AG04450 (cell line): ENCODE measurements at regions of chr12 and their contacts with region 1.

Region 1: GRCh38 chr12:123365025-123365917 is 624 bp upstream of the SBNO1 start:
- DNase-seq: peak; percentile 97
- H3K4me3 ChIP-seq: peak overlapping the region; percentile 74
- H3K27ac ChIP-seq: peak overlapping the region; percentile 98
- H3K27me3 ChIP-seq: no peaks in the 10 kb centered on the region
- CTCF ChIP-seq: peak; percentile 92

Region 2: DNA sequence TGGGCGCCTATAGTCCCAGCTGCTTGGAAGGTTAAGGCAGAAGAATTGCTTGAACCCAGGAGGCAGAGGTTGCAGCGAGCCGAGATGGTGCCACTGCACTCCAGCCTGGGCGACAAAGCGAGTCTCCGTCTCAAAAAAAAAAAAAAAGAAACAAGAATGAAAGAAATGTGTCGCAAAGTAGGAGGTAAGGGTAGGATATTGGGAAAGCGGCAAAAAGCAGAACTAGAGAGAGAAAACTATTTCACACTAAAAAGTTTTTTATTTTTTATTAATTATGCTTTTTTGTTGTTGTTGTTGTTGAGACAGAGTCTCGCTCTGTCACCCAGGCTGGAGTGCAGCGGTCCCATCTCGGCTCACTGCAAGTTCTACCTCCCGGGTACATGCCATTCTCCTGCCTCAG is 18.3 kb before region 1 on chr12:
- CTCF ChIA-PET with region 1: interaction called, 8 read pairs
- POLR2A ChIA-PET with region 1: interaction called, 10 read pairs
- DNase-seq: no peak
- H3K4me3 ChIP-seq: no peak overlapping the region
- H3K27ac ChIP-seq: no peak overlapping the region
- H3K27me3 ChIP-seq: no peaks in the 10 kb centered on the region
- CTCF ChIP-seq: no peak

Region 3: GRCh38 chr12:123384318-123384993 is 19.2 kb after region 1 on chr12:
- CTCF ChIA-PET with region 1: interaction called, 10 read pairs
- POLR2A ChIA-PET with region 1: interaction called, 35 read pairs
- DNase-seq: no peak
- H3K4me3 ChIP-seq: peak overlapping the region; percentile 76
- H3K27ac ChIP-seq: peak overlapping the region; percentile 81
- H3K27me3 ChIP-seq: no peaks in the 10 kb centered on the region
- CTCF ChIP-seq: no peak

Region 4: GRCh38 chr12:123421314-123421713 is 56.0 kb after region 1 on chr12:
- CTCF ChIA-PET with region 1: no interaction called
- POLR2A ChIA-PET with region 1: no interaction called
- DNase-seq: no peak
- H3K4me3 ChIP-seq: no peak overlapping the region
- H3K27ac ChIP-seq: no peak overlapping the region
- H3K27me3 ChIP-seq: no peaks in the 10 kb centered on the region
- CTCF ChIP-seq: no peak